Activated naive CD4-positive, alpha-beta T cell treated with anti-CD3 and anti-CD28 coated beads for 36 hours (primary cell): ENCODE measurements at regions of chr3 and their contacts with region 1.

Region 1: DNA sequence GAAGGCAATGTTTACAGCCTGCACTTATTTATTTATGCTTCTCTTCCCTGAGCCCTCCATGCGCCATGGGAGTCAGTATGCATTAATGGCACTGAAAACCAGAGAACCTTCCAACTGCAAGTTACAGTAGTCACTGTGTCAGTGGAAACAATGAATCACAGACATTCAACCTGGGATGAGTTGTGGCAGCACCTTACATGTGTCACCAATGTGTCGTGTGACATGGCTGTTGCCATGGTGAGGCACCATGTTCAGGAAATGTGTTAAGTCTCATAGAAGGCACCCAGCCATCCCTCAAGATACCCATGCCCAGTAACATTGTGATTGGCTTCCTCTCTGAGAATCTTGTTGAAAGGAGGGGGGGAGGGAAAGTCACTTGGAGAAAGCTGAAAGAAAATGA is 105.0 kb downstream of the FOXP1 start:
- DNase-seq: peak; percentile 94
- H3K4me3 Mint-ChIP-seq: peak overlapping the region; percentile 38
- H3K27ac Mint-ChIP-seq: peak overlapping the region; percentile 96
- H3K4me1 Mint-ChIP-seq: peaks cover 85% of the 10 kb centered on the region
- H3K27me3 Mint-ChIP-seq: no peaks in the 10 kb centered on the region

Region 2: GRCh38 chr3:71130471-71131374 is 347.8 kb before region 1 on chr3:
- CTCF ChIA-PET with region 1: no interaction called
- intact Hi-C with region 1: no loop called
- DNase-seq: peak; percentile 82
- H3K4me3 Mint-ChIP-seq: peak overlapping the region; percentile 88
- H3K27ac Mint-ChIP-seq: peak overlapping the region; percentile 96
- H3K4me1 Mint-ChIP-seq: peaks cover 66% of the 10 kb centered on the region
- H3K27me3 Mint-ChIP-seq: no peaks in the 10 kb centered on the region

Region 3: GRCh38 chr3:71456156-71456555 is 22.4 kb before region 1 on chr3:
- CTCF ChIA-PET with region 1: interaction called, 8 read pairs
- intact Hi-C with region 1: loop called (anchors 1 kb)
- DNase-seq: no peak
- H3K4me3 Mint-ChIP-seq: peak overlapping the region; percentile 77
- H3K27ac Mint-ChIP-seq: peak overlapping the region; percentile 93
- H3K4me1 Mint-ChIP-seq: peaks cover 88% of the 10 kb centered on the region
- H3K27me3 Mint-ChIP-seq: no peaks in the 10 kb centered on the region

Region 4: GRCh38 chr3:71461749-71462465 is 16.7 kb before region 1 on chr3:
- CTCF ChIA-PET with region 1: interaction called, 8 read pairs
- intact Hi-C with region 1: loop called (anchors 1 kb)
- DNase-seq: no peak
- H3K4me3 Mint-ChIP-seq: no peak overlapping the region
- H3K27ac Mint-ChIP-seq: peak overlapping the region; percentile 93
- H3K4me1 Mint-ChIP-seq: peaks cover 85% of the 10 kb centered on the region
- H3K27me3 Mint-ChIP-seq: no peaks in the 10 kb centered on the region

Region 5: GRCh38 chr3:71495708-71496472 is 17.3 kb after region 1 on chr3:
- CTCF ChIA-PET with region 1: no interaction called
- intact Hi-C with region 1: loop called (anchors 1 kb)
- DNase-seq: peak; percentile 43
- H3K4me3 Mint-ChIP-seq: peak overlapping the region; percentile 49
- H3K27ac Mint-ChIP-seq: peak overlapping the region; percentile 73
- H3K4me1 Mint-ChIP-seq: peaks cover 83% of the 10 kb centered on the region
- H3K27me3 Mint-ChIP-seq: no peaks in the 10 kb centered on the region

Region 6: GRCh38 chr3:71641674-71642073 is 163.1 kb after region 1 on chr3:
- CTCF ChIA-PET with region 1: no interaction called
- intact Hi-C with region 1: no loop called
- DNase-seq: no peak
- H3K4me3 Mint-ChIP-seq: no peak overlapping the region
- H3K27ac Mint-ChIP-seq: no peak overlapping the region
- H3K4me1 Mint-ChIP-seq: no peaks in the 10 kb centered on the region
- H3K27me3 Mint-ChIP-seq: no peaks in the 10 kb centered on the region

Region 7: DNA sequence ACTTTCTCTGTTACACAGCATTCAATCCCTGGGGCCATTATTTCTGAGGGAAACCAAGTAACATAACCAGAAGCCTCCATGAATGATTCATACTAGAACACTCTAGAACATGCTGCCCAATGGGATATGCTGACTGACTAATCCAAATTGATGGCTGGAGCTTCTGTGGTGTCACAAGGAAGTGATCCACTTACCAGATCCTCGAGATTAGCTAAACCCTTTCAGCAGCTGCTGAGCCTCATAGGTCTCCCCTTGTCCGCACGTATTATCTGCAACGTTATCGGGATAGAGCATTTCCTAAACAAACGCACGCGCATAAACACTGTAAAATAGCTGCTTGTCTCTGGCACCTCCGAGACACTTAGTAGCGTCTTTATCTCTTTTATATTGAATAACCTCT is 367.6 kb after region 1 on chr3:
- CTCF ChIA-PET with region 1: no interaction called
- intact Hi-C with region 1: no loop called
- DNase-seq: no peak
- H3K4me3 Mint-ChIP-seq: no peak overlapping the region
- H3K27ac Mint-ChIP-seq: no peak overlapping the region
- H3K4me1 Mint-ChIP-seq: no peaks in the 10 kb centered on the region
- H3K27me3 Mint-ChIP-seq: peaks cover 6% of the 10 kb centered on the region

Region 8: GRCh38 chr3:72223116-72223515 is 744.5 kb after region 1 on chr3:
- CTCF ChIA-PET with region 1: no interaction called
- intact Hi-C with region 1: no loop called
- DNase-seq: no peak
- H3K4me3 Mint-ChIP-seq: no peak overlapping the region
- H3K27ac Mint-ChIP-seq: no peak overlapping the region
- H3K4me1 Mint-ChIP-seq: peaks cover 8% of the 10 kb centered on the region
- H3K27me3 Mint-ChIP-seq: no peaks in the 10 kb centered on the region